CD8-positive, alpha-beta T cell (primary cell): ENCODE measurements at regions of chr7 and their contacts with region 1.

Region 1: GRCh38 chr7:89622838-89623672 is 531.2 kb upstream of the STEAP1 start:
- DNase-seq: peak in 2 of 9 experiments; percentile 39 to 57
- ATAC-seq: peak; percentile 66
- H3K4me3 ChIP-seq: no peak overlapping the region
- H3K4me3 Mint-ChIP-seq: no peak overlapping the region
- H3K27ac ChIP-seq: no peak overlapping the region
- H3K27ac Mint-ChIP-seq: no peak overlapping the region
- H3K4me1 ChIP-seq: peaks cover 14% of the 10 kb centered on the region
- H3K4me1 Mint-ChIP-seq: peaks cover 26% of the 10 kb centered on the region
- H3K27me3 ChIP-seq: no peaks in the 10 kb centered on the region
- H3K27me3 Mint-ChIP-seq: no peaks in the 10 kb centered on the region
- CTCF ChIP-seq: peak; percentile 61

Region 2: DNA sequence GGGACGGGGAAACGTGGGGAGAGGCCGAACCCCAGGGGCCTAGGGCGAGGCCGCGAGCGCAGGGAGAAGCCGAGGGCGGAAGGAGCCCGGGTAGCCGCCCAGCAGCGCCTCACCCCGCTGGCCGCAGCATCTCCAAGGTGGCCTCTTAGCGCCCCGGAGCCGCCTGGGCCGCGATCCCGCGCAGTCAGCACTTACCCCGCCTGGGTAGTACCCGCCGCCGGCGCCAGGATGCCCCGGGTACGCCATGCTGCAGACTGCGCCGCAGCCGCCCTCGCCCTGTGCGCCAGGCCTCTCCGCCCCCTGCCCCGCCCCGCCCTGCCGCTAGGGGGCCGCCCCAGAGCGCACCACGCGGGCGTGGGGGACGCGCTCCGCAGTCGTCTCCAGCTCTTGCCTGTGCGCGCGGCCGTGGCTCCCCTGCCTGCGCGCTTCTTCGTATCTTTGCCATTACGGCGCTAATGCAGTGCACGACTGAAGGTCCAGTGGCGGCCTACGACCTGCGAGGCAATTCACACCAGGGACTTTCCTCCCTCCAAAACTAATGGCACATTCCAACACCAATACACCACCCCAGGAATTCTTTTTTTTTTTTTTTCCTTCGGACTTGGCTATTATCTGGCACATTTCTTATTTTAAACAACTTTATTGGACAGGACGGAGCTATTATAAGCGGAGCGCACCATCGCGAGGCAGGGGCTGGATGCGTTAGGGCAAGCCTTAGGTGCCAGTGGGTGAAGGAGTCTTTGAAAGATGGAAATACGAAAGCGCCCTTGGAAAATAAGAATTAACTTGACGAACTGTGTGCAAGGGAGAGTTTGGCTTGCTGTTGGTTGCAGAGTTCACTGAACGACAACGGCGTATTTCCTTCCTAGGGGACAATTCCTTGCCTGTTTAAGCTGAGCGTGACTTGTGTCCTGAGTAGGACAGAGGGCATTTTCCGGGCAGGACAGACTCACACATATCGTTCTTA is 1403.0 kb before region 1 on chr7 and contains the start of gene SRI:
- CTCF ChIA-PET with region 1: no interaction called
- POLR2A ChIA-PET with region 1: no interaction called
- intact Hi-C with region 1: loop called in 1 of 2 experiments (anchors 10 kb)
- DNase-seq: peak; percentile 87 to 95 (median 92)
- ATAC-seq: peak; percentile 97
- H3K4me3 ChIP-seq: peak within 1 kb of the TSS; percentile 81 to 86
- H3K4me3 Mint-ChIP-seq: peak within 1 kb of the TSS; percentile 95
- H3K27ac ChIP-seq: peak within 1 kb of the TSS; percentile 73 to 83
- H3K27ac Mint-ChIP-seq: peak within 1 kb of the TSS; percentile 97
- H3K4me1 ChIP-seq: peaks cover 21% of the 10 kb centered on the region
- H3K4me1 Mint-ChIP-seq: peaks cover 34% of the 10 kb centered on the region
- H3K27me3 ChIP-seq: no peaks in the 10 kb centered on the region
- H3K27me3 Mint-ChIP-seq: no peaks in the 10 kb centered on the region
- CTCF ChIP-seq: peak; percentile 97
- total RNA-seq, gene SRI: 38.5 to 43.9 TPM

Region 3: DNA sequence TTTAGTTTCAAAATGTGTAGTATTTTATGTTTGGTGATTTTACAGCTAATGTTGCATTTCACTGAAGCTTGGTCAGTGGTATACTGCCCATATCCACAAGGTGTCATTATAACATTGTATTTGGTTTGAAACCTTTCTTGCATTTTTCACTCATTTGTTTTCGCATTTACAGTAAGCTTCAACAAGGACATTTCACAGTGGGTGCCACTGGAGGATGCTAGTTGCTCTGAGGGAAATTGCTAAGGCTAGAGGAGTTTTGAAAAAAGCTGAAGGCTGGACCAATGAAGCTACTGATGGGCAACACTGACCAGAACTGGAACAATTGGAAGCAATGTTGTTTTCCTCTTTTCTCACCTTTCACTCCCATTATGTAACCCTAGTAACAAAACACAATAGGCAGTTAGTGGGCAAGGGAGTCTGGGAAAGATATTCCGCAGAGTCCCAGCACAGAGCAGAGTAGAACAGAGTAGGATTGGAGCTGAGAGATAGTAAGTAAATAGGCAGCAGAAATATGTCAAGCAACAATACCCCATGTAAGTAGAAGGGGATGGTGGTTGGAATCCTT is 1379.6 kb before region 1 on chr7:
- CTCF ChIA-PET with region 1: no interaction called
- POLR2A ChIA-PET with region 1: no interaction called
- intact Hi-C with region 1: loop called in 1 of 2 experiments (anchors 2 kb)
- DNase-seq: peak in 2 of 9 experiments; percentile 13 to 30
- ATAC-seq: peak; percentile 42
- H3K4me3 ChIP-seq: no peak overlapping the region
- H3K4me3 Mint-ChIP-seq: no peak overlapping the region
- H3K27ac ChIP-seq: no peak overlapping the region
- H3K27ac Mint-ChIP-seq: no peak overlapping the region
- H3K4me1 ChIP-seq: no peaks in the 10 kb centered on the region
- H3K4me1 Mint-ChIP-seq: no peaks in the 10 kb centered on the region
- H3K27me3 ChIP-seq: no peaks in the 10 kb centered on the region
- H3K27me3 Mint-ChIP-seq: peaks cover 3% of the 10 kb centered on the region
- CTCF ChIP-seq: peak; percentile 27

Region 4: DNA sequence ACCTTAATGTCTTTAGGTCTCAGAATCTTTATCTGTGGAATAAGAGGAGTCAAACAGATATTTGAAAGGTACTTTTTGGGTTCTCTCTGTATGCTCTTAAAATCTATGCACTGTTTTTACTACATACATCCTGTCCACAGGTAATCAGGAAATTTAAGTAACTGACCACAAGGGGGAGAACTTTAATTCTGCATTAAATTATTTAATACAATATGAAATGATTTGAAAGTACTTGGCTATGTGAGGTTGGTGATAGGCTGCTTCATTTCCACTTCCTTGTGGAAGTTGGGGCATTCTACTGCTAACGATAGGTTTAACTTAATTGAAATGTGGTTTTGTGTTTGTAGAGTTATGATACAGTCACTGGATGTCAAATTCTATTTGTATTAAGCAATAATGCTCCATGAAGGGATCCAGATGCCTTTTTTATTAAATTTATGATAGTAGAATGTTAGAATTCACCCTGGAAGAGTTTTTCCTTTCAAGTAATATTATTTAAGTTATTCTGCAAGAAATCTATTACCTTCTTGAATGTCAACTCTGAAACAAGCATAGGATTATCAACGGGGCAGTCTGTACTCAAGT is 833.5 kb before region 1 on chr7:
- CTCF ChIA-PET with region 1: interaction called, 4 read pairs
- POLR2A ChIA-PET with region 1: no interaction called
- intact Hi-C with region 1: loop called in 1 of 2 experiments (anchors 2 kb)
- DNase-seq: peak in 2 of 9 experiments; percentile 6 to 26
- ATAC-seq: no peak
- H3K4me3 ChIP-seq: no peak overlapping the region
- H3K4me3 Mint-ChIP-seq: no peak overlapping the region
- H3K27ac ChIP-seq: no peak overlapping the region
- H3K27ac Mint-ChIP-seq: no peak overlapping the region
- H3K4me1 ChIP-seq: no peaks in the 10 kb centered on the region
- H3K4me1 Mint-ChIP-seq: no peaks in the 10 kb centered on the region
- H3K27me3 ChIP-seq: no peaks in the 10 kb centered on the region
- H3K27me3 Mint-ChIP-seq: no peaks in the 10 kb centered on the region
- CTCF ChIP-seq: peak; percentile 69

Region 5: GRCh38 chr7:88967432-88967831 is 655.6 kb before region 1 on chr7:
- CTCF ChIA-PET with region 1: interaction called, 3 read pairs
- POLR2A ChIA-PET with region 1: no interaction called
- intact Hi-C with region 1: loop called in 1 of 2 experiments (anchors 2 kb)
- DNase-seq: no peak
- ATAC-seq: no peak
- H3K4me3 ChIP-seq: no peak overlapping the region
- H3K4me3 Mint-ChIP-seq: no peak overlapping the region
- H3K27ac ChIP-seq: no peak overlapping the region
- H3K27ac Mint-ChIP-seq: no peak overlapping the region
- H3K4me1 ChIP-seq: no peaks in the 10 kb centered on the region
- H3K4me1 Mint-ChIP-seq: no peaks in the 10 kb centered on the region
- H3K27me3 ChIP-seq: no peaks in the 10 kb centered on the region
- H3K27me3 Mint-ChIP-seq: no peaks in the 10 kb centered on the region
- CTCF ChIP-seq: no peak

Region 6: GRCh38 chr7:89334797-89335196 is 288.3 kb before region 1 on chr7:
- CTCF ChIA-PET with region 1: interaction called, 4 read pairs
- POLR2A ChIA-PET with region 1: no interaction called
- intact Hi-C with region 1: loop called in 1 of 2 experiments (anchors 2 kb)
- DNase-seq: no peak
- ATAC-seq: no peak
- H3K4me3 ChIP-seq: no peak overlapping the region
- H3K4me3 Mint-ChIP-seq: no peak overlapping the region
- H3K27ac ChIP-seq: no peak overlapping the region
- H3K27ac Mint-ChIP-seq: no peak overlapping the region
- H3K4me1 ChIP-seq: no peaks in the 10 kb centered on the region
- H3K4me1 Mint-ChIP-seq: peaks cover 2% of the 10 kb centered on the region
- H3K27me3 ChIP-seq: no peaks in the 10 kb centered on the region
- H3K27me3 Mint-ChIP-seq: no peaks in the 10 kb centered on the region
- CTCF ChIP-seq: no peak